Activated B cell treated with CpG ODN at 0.5 μM for 24 hours (primary cell): ENCODE measurements at regions of chr20 and their contacts with region 1.

Region 1: GRCh38 chr20:49812463-49813304 is at the start of gene SLC9A8:
- DNase-seq: peak; percentile 84
- ATAC-seq: peak; percentile 88
- H3K4me3 Mint-ChIP-seq: peak within 1 kb of the TSS; percentile 95
- H3K27ac Mint-ChIP-seq: peak within 1 kb of the TSS; percentile 94
- H3K4me1 Mint-ChIP-seq: peaks cover 72% of the 10 kb centered on the region
- H3K27me3 Mint-ChIP-seq: no peaks in the 10 kb centered on the region
- CTCF ChIP-seq: no peak
- total RNA-seq, gene SLC9A8: 49.2 and 65.7 TPM in 2 replicates

Region 2: GRCh38 chr20:49278036-49278817 is 534.5 kb before region 1 on chr20 and contains the start of gene ZNFX1:
- CTCF ChIA-PET with region 1: no interaction called
- POLR2A ChIA-PET with region 1: no interaction called
- intact Hi-C with region 1: loop called (anchors 1 kb)
- DNase-seq: peak; percentile 96
- ATAC-seq: peak; percentile 81
- H3K4me3 Mint-ChIP-seq: peak within 1 kb of the TSS; percentile 98
- H3K27ac Mint-ChIP-seq: peak within 1 kb of the TSS; percentile 98
- H3K4me1 Mint-ChIP-seq: peaks cover 66% of the 10 kb centered on the region
- H3K27me3 Mint-ChIP-seq: no peaks in the 10 kb centered on the region
- CTCF ChIP-seq: no peak
- total RNA-seq, gene ZNFX1: 49.6 and 51.9 TPM in 2 replicates

Region 3: GRCh38 chr20:49668181-49668877 is 144.4 kb before region 1 on chr20:
- CTCF ChIA-PET with region 1: no interaction called
- POLR2A ChIA-PET with region 1: interaction called, 13 read pairs
- intact Hi-C with region 1: loop called (anchors 1 kb)
- DNase-seq: peak; percentile 43
- ATAC-seq: peak; percentile 84
- H3K4me3 Mint-ChIP-seq: peak overlapping the region; percentile 68
- H3K27ac Mint-ChIP-seq: peak overlapping the region; percentile 66
- H3K4me1 Mint-ChIP-seq: peaks cover 65% of the 10 kb centered on the region
- H3K27me3 Mint-ChIP-seq: no peaks in the 10 kb centered on the region
- CTCF ChIP-seq: no peak

Region 4: DNA sequence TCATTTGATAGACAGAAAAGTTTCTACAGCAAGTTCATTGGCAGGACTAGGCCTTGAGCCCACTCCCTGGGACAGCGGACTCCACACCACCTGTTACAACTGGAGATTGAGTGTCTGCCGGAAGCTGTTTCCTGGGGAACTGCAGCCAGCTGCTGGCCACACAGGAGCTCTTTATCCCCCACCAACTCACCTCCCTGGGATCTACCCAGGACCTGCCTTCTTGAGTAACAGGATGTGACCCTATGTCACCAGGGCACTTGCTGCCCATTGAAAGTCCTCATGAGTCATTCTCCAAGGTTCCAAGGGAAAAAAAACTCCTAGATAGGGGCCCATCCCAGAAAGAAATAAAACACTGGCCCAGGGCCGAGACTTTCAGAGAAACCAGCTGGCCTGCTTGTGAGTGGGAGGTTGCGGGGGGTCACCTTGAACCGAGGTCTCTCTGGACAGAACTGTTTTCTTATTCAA is 37.4 kb before region 1 on chr20:
- CTCF ChIA-PET with region 1: no interaction called
- POLR2A ChIA-PET with region 1: interaction called, 10 read pairs
- intact Hi-C with region 1: loop called (anchors 5 kb)
- DNase-seq: no peak
- ATAC-seq: no peak
- H3K4me3 Mint-ChIP-seq: no peak overlapping the region
- H3K27ac Mint-ChIP-seq: no peak overlapping the region
- H3K4me1 Mint-ChIP-seq: peaks cover 12% of the 10 kb centered on the region
- H3K27me3 Mint-ChIP-seq: no peaks in the 10 kb centered on the region
- CTCF ChIP-seq: no peak

Region 5: GRCh38 chr20:49794336-49795138 is 18.1 kb before region 1 on chr20:
- CTCF ChIA-PET with region 1: no interaction called
- POLR2A ChIA-PET with region 1: interaction called, 205 read pairs
- intact Hi-C with region 1: no loop called
- DNase-seq: no peak
- ATAC-seq: peak; percentile 64
- H3K4me3 Mint-ChIP-seq: peak overlapping the region; percentile 53
- H3K27ac Mint-ChIP-seq: peak overlapping the region; percentile 60
- H3K4me1 Mint-ChIP-seq: peaks cover 64% of the 10 kb centered on the region
- H3K27me3 Mint-ChIP-seq: no peaks in the 10 kb centered on the region
- CTCF ChIP-seq: no peak

Region 6: GRCh38 chr20:49915378-49916145 is 102.9 kb after region 1 on chr20 and contains the start of gene SPATA2:
- CTCF ChIA-PET with region 1: no interaction called
- POLR2A ChIA-PET with region 1: interaction called, 3 read pairs
- intact Hi-C with region 1: loop called (anchors 1 kb)
- DNase-seq: peak; percentile 95
- ATAC-seq: peak; percentile 80
- H3K4me3 Mint-ChIP-seq: peak within 1 kb of the TSS; percentile 97
- H3K27ac Mint-ChIP-seq: peak within 1 kb of the TSS; percentile 99
- H3K4me1 Mint-ChIP-seq: peaks cover 34% of the 10 kb centered on the region
- H3K27me3 Mint-ChIP-seq: no peaks in the 10 kb centered on the region
- CTCF ChIP-seq: no peak
- total RNA-seq, gene SPATA2: 9.1 and 9.4 TPM in 2 replicates